B cell (primary cell): ENCODE measurements at regions of chr6 and their contacts with region 1.

Region 1: DNA sequence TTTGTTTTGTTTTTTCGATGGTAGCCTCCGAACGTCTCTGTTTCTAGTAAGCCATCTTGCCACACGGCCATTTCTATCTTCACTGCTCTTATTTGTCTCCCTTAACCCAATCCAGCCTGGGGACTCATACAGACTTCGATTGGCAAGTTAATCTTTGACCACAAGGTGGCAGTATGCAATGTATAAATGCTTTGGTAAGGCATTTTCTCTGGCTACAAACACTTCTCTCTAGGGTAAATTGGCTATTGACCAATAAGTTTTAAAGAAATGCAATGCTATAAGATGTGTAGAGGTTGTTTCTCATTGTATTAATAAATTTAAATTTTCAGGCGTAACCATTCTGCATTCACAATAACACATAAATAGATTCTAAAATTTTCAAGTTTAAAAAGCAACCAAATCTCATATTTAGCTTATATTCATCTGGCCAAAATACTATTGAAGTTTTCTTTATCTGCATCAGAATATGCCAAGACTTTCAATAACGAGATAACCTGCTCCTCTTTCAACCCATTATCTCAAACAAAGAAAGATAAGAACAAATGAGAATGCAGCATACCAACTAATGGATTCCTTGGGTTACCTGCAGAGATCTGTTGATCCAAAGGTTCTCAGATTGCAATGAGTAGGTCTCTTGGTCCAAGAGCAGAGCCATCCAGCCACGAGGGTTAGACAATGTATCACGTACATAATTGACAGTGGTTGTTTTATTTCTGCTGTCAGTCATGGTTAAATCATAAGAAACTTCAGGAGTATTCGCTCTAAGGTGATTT is 231.9 kb downstream of the PKHD1 start:
- DNase-seq: peak; percentile 55
- ATAC-seq: no peak
- H3K4me3 ChIP-seq: no peak overlapping the region
- H3K4me3 Mint-ChIP-seq: no peak overlapping the region
- H3K27ac ChIP-seq: no peak overlapping the region
- H3K27ac Mint-ChIP-seq: no peak overlapping the region
- H3K4me1 ChIP-seq: no peaks in the 10 kb centered on the region
- H3K4me1 Mint-ChIP-seq: no peaks in the 10 kb centered on the region
- H3K27me3 ChIP-seq: no peaks in the 10 kb centered on the region
- H3K27me3 Mint-ChIP-seq: peaks cover 10% of the 10 kb centered on the region
- CTCF ChIP-seq: peak; percentile 76

Region 2: GRCh38 chr6:50816115-50816675 is 1039.3 kb before region 1 on chr6:
- CTCF ChIA-PET with region 1: no interaction called
- POLR2A ChIA-PET with region 1: no interaction called
- intact Hi-C with region 1: loop called (anchors 10 kb)
- DNase-seq: peak; percentile 67
- ATAC-seq: peak; percentile 28
- H3K4me3 ChIP-seq: peak overlapping the region; percentile 40 to 87 (median 53)
- H3K4me3 Mint-ChIP-seq: peak overlapping the region; percentile 88
- H3K27ac ChIP-seq: no peak overlapping the region
- H3K27ac Mint-ChIP-seq: no peak overlapping the region
- H3K4me1 ChIP-seq: peaks cover 8 to 19% of the 10 kb centered on the region in 2 donors
- H3K4me1 Mint-ChIP-seq: peaks cover 18% of the 10 kb centered on the region
- H3K27me3 ChIP-seq: peaks cover 1 to 41% (median 29%) of the 10 kb centered on the region in 4 experiments
- H3K27me3 Mint-ChIP-seq: peaks cover 57% of the 10 kb centered on the region
- CTCF ChIP-seq: peak; percentile 86

Region 3: DNA sequence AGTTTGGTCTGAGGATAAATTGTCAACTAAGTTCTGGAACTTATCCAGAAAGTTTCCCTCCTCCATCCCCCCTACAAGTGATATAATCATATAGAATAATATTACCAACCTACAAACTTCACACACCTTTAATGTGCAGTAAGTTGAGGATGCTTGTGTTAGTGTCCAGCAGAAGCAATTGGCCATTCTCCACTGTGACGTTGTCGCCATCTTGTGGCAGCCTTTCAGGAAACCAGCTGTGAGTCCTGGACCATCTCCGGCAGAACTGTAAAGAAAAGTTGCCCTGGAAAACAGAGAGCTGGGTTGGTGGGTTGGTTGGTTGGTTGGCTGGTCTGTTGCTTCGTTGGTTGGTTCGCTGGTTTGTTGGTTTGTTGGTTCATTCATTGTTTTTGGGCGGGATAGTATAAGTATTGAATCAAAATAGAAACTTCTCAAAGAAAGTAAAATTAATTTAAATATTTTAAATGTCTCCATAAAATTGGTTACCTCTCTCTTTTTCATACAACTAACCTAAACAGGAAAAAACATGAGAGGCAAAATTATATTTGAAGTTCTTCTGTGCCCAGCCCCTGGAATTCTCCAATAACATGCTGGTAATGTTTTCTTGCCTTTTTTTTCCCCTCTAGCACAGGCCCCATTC is 104.4 kb after region 1 on chr6:
- CTCF ChIA-PET with region 1: no interaction called
- POLR2A ChIA-PET with region 1: no interaction called
- intact Hi-C with region 1: loop called (anchors 1 kb)
- DNase-seq: peak; percentile 50
- ATAC-seq: no peak
- H3K4me3 ChIP-seq: no peak overlapping the region
- H3K4me3 Mint-ChIP-seq: no peak overlapping the region
- H3K27ac ChIP-seq: no peak overlapping the region
- H3K27ac Mint-ChIP-seq: no peak overlapping the region
- H3K4me1 ChIP-seq: no peaks in the 10 kb centered on the region
- H3K4me1 Mint-ChIP-seq: peaks cover 1% of the 10 kb centered on the region
- H3K27me3 ChIP-seq: peaks cover 0 to 5% (median 1%) of the 10 kb centered on the region in 4 experiments
- H3K27me3 Mint-ChIP-seq: peaks cover 8% of the 10 kb centered on the region
- CTCF ChIP-seq: peak; percentile 52

Region 4: DNA sequence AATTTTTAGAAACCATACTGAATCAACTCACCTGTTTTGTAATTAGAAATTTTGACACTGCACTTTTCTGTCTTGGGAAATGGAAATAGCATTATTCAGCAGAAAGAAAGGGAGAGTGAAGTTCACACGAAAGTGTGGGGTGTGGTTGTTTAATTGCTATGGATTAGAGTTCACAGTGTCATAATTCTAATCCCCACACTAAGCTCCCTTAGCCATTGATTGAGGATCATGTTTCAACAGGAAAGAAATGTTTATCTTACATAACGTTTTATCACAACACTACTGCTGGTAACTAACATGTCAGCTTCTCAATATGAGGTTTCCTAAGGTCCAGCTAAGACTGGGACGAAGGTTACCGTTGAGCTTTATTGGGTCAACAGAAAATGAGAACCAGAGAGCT is 1016.5 kb after region 1 on chr6:
- CTCF ChIA-PET with region 1: no interaction called
- POLR2A ChIA-PET with region 1: no interaction called
- intact Hi-C with region 1: no loop called
- DNase-seq: no peak
- ATAC-seq: no peak
- H3K4me3 ChIP-seq: no peak overlapping the region
- H3K4me3 Mint-ChIP-seq: no peak overlapping the region
- H3K27ac ChIP-seq: no peak overlapping the region
- H3K27ac Mint-ChIP-seq: no peak overlapping the region
- H3K4me1 ChIP-seq: no peaks in the 10 kb centered on the region
- H3K4me1 Mint-ChIP-seq: no peaks in the 10 kb centered on the region
- H3K27me3 ChIP-seq: peaks cover 0 to 2% (median 0%) of the 10 kb centered on the region in 4 experiments
- H3K27me3 Mint-ChIP-seq: peaks cover 20% of the 10 kb centered on the region
- CTCF ChIP-seq: no peak